Heart right ventricle (tissue), 16 donors: ENCODE measurements at regions of chr22 and their contacts with region 1.

Region 1: GRCh38 chr22:42169055-42169469 is 38.5 kb upstream of the CYP2D6 start:
- DNase-seq: peak; percentile 55 to 74
- ATAC-seq: peak; percentile 63 to 89 (median 82)
- H3K4me3 ChIP-seq: no peak overlapping the region
- H3K27ac ChIP-seq: no peak overlapping the region
- H3K4me1 ChIP-seq: peaks cover 0 to 9% (median 0%) of the 10 kb centered on the region in 9 donors
- H3K27me3 ChIP-seq: no peaks in the 10 kb centered on the region
- CTCF ChIP-seq: peak; percentile 73 to 96 (median 90)

Region 2: GRCh38 chr22:42283278-42284201 is 114.5 kb after region 1 on chr22:
- intact Hi-C with region 1: loop called in 1 of 10 experiments (anchors 5 kb)
- DNase-seq: no peak
- ATAC-seq: peak in 3 of 8 donors; percentile 20 to 43 (median 32)
- H3K4me3 ChIP-seq: peak overlapping the region in 9 of 10 donors; percentile 15 to 46 (median 36)
- H3K27ac ChIP-seq: no peak overlapping the region
- H3K4me1 ChIP-seq: peaks cover 0 to 16% (median 10%) of the 10 kb centered on the region in 9 donors
- H3K27me3 ChIP-seq: peaks cover 0 to 65% (median 57%) of the 10 kb centered on the region in 7 donors
- CTCF ChIP-seq: no peak

Region 3: GRCh38 chr22:42432020-42432596 is 263.0 kb after region 1 on chr22 and contains the start of gene NFAM1:
- intact Hi-C with region 1: loop called in 8 of 10 experiments (anchors 1 to 5 kb)
- DNase-seq: peak in 1 of 2 donors; percentile 54
- ATAC-seq: peak in 7 of 8 donors; percentile 44 to 75 (median 62)
- H3K4me3 ChIP-seq: peak within 1 kb of the TSS in 7 of 10 donors; percentile 17 to 62 (median 33)
- H3K27ac ChIP-seq: peak within 1 kb of the TSS in 6 of 10 donors; percentile 31 to 95 (median 60)
- H3K4me1 ChIP-seq: peaks cover 0 to 58% (median 18%) of the 10 kb centered on the region in 9 donors
- H3K27me3 ChIP-seq: peaks cover 0 to 82% (median 54%) of the 10 kb centered on the region in 7 donors
- CTCF ChIP-seq: no peak
- total RNA-seq, gene NFAM1: 0.45 to 6.4 (median 1.6) TPM